ENCODE measurements at regions of chr6 and their contacts with region 1.

Region 1: GRCh38 chr6:84779380-84779779 is 15.0 kb upstream of the TBX18 start:
- DNase-seq: no peak
- H3K4me3 ChIP-seq: no peak overlapping the region
- H3K27ac ChIP-seq: no peak overlapping the region
- H3K4me1 ChIP-seq: peaks cover 3% of the 10 kb centered on the region
- H3K27me3 ChIP-seq: peaks cover 9 to 44% of the 10 kb centered on the region in 2 experiments
- CTCF ChIP-seq: peak; percentile 21 to 46
- POLR2A ChIP-seq: no peak

Region 2: GRCh38 chr6:84696166-84696565 is 83.2 kb before region 1 on chr6:
- CTCF ChIA-PET with region 1: no interaction called
- POLR2A ChIA-PET with region 1: no interaction called
- dilution Hi-C with region 1: no loop called
- intact Hi-C with region 1: no loop called
- DNase-seq: no peak
- H3K4me3 ChIP-seq: no peak overlapping the region
- H3K27ac ChIP-seq: no peak overlapping the region
- H3K4me1 ChIP-seq: no peaks in the 10 kb centered on the region
- H3K27me3 ChIP-seq: no peaks in the 10 kb centered on the region
- CTCF ChIP-seq: no peak
- POLR2A ChIP-seq: no peak

Region 3: GRCh38 chr6:84791233-84791632 is 11.9 kb after region 1 on chr6:
- CTCF ChIA-PET with region 1: interaction called, 31 read pairs
- POLR2A ChIA-PET with region 1: no interaction called
- dilution Hi-C with region 1: no loop called
- intact Hi-C with region 1: no loop called
- DNase-seq: peak; percentile 91
- H3K4me3 ChIP-seq: peak overlapping the region in 1 of 3 experiments; percentile 27
- H3K27ac ChIP-seq: peak overlapping the region; percentile 70
- H3K4me1 ChIP-seq: peaks cover 21% of the 10 kb centered on the region
- H3K27me3 ChIP-seq: no peaks in the 10 kb centered on the region
- CTCF ChIP-seq: no peak
- POLR2A ChIP-seq: no peak

Measured in endothelial cell of umbilical vein (primary cell).